Activated T-helper 2 cell treated with anti-CD3 and anti-CD28 coated beads, Interferon-gamma antibody, Interleukin-2, Interleukin-4, amounts not matched to agents 10 μg/mL and 5 μg/mL and 100 μg/mL, durations not matched to agents 14 hours and 24 hours and 36 hours (primary cell): ENCODE measurements at regions of chr18 and their contacts with region 1.

Region 1: DNA sequence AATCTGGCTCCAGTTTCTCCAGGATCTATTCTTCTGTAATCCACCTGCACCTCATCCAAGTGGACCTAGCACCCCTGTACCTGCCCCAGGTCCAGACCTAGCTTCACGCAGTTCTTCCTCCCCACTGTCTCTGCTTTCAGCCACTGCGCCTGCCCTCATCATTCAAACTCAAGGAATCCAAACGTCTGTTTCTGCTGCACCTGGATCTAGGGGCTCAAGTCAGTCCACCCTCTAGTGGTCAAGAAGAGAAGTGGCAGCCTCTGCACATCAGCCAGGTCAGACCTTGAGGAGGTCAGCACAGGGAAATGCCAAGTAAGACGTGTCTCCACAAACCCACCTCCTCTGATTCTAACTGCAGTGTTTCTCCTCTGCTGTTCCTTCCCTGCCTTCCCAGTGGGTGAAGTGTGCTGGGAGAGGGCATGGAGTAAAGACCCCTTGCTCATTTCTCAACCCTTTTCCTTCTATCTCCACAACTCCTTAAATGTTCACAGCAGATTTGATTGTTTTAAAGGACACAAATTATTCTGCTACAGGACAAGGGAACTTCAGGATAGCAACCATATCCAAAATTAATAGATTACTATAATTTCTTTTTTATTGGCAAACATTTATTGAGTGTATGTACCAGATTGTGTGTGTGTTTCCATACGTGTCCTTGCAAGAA is 8.6 kb upstream of the RNF152 start:
- DNase-seq: no peak
- H3K4me3 Mint-ChIP-seq: no peak overlapping the region
- H3K27ac Mint-ChIP-seq: no peak overlapping the region
- H3K4me1 Mint-ChIP-seq: no peaks in the 10 kb centered on the region
- H3K27me3 Mint-ChIP-seq: peaks cover 59% of the 10 kb centered on the region

Region 2: DNA sequence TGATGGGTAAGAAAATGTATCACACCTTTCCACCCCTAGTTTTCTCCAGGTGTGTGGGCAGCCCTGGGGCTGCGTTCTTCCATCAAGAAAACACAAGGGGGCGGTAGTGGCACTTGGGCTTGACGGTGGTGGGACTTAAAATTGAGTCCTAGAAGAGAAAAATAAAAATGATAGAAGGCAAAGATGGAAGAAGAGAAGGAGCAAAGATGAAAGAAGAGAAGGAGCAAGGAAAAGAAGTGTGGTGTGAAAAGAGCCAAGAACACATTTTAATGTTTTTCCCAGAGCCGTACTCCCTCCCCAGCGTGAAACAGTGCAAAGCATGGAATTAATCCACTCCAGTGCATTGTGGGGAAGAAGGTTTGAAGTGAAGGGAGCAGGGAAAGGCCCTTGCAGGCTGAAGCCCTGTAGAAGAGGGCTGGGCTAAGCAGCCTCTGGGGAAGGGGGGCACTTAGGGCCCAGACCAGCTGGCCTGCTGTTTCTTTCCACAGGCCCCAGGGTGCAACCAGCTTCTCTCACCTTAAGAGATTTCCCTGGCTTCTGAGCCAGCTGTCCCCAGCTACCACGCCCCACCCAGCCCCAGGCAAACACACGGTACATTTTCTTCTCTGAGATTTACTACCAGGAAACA is 265.4 kb before region 1 on chr18:
- intact Hi-C with region 1: loop called (anchors 1 kb)
- DNase-seq: no peak
- H3K4me3 Mint-ChIP-seq: no peak overlapping the region
- H3K27ac Mint-ChIP-seq: no peak overlapping the region
- H3K4me1 Mint-ChIP-seq: no peaks in the 10 kb centered on the region
- H3K27me3 Mint-ChIP-seq: peaks cover 7% of the 10 kb centered on the region